ENCODE measurements at regions of chr6 and their contacts with region 1.

Region 1: GRCh38 chr6:143510991-143511891 is at the start of gene FUCA2:
- DNase-seq: peak; percentile 91 to 93
- H3K4me3 ChIP-seq: peak within 1 kb of the TSS; percentile 60
- H3K4me3 Mint-ChIP-seq: peak within 1 kb of the TSS; percentile 97
- H3K27ac Mint-ChIP-seq: peak within 1 kb of the TSS; percentile 91
- H3K4me1 ChIP-seq: peaks cover 11% of the 10 kb centered on the region
- H3K4me1 Mint-ChIP-seq: peaks cover 16% of the 10 kb centered on the region
- H3K27me3 ChIP-seq: no peaks in the 10 kb centered on the region
- H3K27me3 Mint-ChIP-seq: no peaks in the 10 kb centered on the region
- CTCF ChIP-seq: peak in 1 of 2 experiments; percentile 17
- total RNA-seq, gene FUCA2: 102 and 119 TPM in 2 replicates

Region 2: DNA sequence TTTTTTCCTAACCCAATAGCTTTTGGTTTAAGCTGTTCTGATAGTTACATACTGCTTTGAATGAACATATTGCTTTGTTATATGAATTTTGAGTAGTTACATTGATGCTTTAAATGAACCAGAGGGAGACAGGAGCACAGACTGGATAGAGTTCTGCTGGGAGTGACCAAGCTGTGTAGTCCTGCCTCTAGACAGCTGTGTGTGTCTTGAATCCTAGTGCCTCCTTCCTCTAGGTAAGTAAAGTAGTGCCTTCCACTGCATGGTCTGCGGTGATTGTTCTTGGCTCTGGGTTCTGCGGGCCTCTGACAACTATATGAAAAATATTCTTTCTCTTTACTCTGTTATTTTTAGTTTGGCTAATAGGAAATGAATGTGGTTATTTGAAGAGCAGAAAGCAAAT is 1255.5 kb before region 1 on chr6:
- CTCF ChIA-PET with region 1: no interaction called
- POLR2A ChIA-PET with region 1: no interaction called
- intact Hi-C with region 1: loop called (anchors 5 kb)
- DNase-seq: no peak
- H3K4me3 ChIP-seq: no peak overlapping the region
- H3K4me3 Mint-ChIP-seq: no peak overlapping the region
- H3K27ac Mint-ChIP-seq: no peak overlapping the region
- H3K4me1 ChIP-seq: peaks cover 22% of the 10 kb centered on the region
- H3K4me1 Mint-ChIP-seq: peaks cover 19% of the 10 kb centered on the region
- H3K27me3 ChIP-seq: no peaks in the 10 kb centered on the region
- H3K27me3 Mint-ChIP-seq: no peaks in the 10 kb centered on the region
- CTCF ChIP-seq: no peak

Region 3: DNA sequence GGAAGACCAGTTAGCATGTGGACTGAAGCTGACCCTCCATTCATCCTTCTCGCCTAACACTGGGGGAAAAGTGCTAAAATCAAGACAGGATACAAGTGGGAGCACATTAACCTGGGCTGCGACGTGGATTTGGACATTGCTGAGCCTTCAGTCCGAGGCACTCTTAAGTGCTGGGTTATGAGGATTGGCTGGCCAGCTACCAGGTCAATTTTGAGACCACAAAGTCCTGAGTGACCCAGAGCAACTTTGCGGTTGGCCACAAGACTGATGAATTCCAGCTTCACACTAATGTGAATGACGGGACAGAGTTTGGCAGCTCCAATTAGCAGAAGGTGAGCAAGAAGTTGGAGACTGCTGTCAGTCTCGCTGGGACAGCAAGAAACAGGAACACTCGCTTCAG is 20.5 kb before region 1 on chr6:
- CTCF ChIA-PET with region 1: no interaction called
- POLR2A ChIA-PET with region 1: no interaction called
- intact Hi-C with region 1: no loop called
- DNase-seq: no peak
- H3K4me3 ChIP-seq: no peak overlapping the region
- H3K4me3 Mint-ChIP-seq: no peak overlapping the region
- H3K27ac Mint-ChIP-seq: no peak overlapping the region
- H3K4me1 ChIP-seq: no peaks in the 10 kb centered on the region
- H3K4me1 Mint-ChIP-seq: peaks cover 15% of the 10 kb centered on the region
- H3K27me3 ChIP-seq: no peaks in the 10 kb centered on the region
- H3K27me3 Mint-ChIP-seq: no peaks in the 10 kb centered on the region
- CTCF ChIP-seq: no peak

Region 4: GRCh38 chr6:143536865-143537691 is 25.8 kb after region 1 on chr6:
- CTCF ChIA-PET with region 1: interaction called, 3 read pairs
- POLR2A ChIA-PET with region 1: interaction called, 15 read pairs
- intact Hi-C with region 1: loop called (anchors 1 kb)
- DNase-seq: peak; percentile 78 to 84
- H3K4me3 ChIP-seq: peak overlapping the region; percentile 39
- H3K4me3 Mint-ChIP-seq: peak overlapping the region; percentile 82
- H3K27ac Mint-ChIP-seq: peak overlapping the region; percentile 84
- H3K4me1 ChIP-seq: peaks cover 61% of the 10 kb centered on the region
- H3K4me1 Mint-ChIP-seq: peaks cover 24% of the 10 kb centered on the region
- H3K27me3 ChIP-seq: no peaks in the 10 kb centered on the region
- H3K27me3 Mint-ChIP-seq: no peaks in the 10 kb centered on the region
- CTCF ChIP-seq: peak; percentile 19 to 63

Region 5: GRCh38 chr6:143545976-143546547 is 34.8 kb after region 1 on chr6:
- CTCF ChIA-PET with region 1: interaction called, 3 read pairs
- POLR2A ChIA-PET with region 1: interaction called, 3 read pairs
- intact Hi-C with region 1: loop called (anchors 2 kb)
- DNase-seq: peak in 1 of 2 experiments; percentile 50
- H3K4me3 ChIP-seq: no peak overlapping the region
- H3K4me3 Mint-ChIP-seq: peak overlapping the region; percentile 39
- H3K27ac Mint-ChIP-seq: peak overlapping the region; percentile 75
- H3K4me1 ChIP-seq: peaks cover 69% of the 10 kb centered on the region
- H3K4me1 Mint-ChIP-seq: peaks cover 47% of the 10 kb centered on the region
- H3K27me3 ChIP-seq: no peaks in the 10 kb centered on the region
- H3K27me3 Mint-ChIP-seq: no peaks in the 10 kb centered on the region
- CTCF ChIP-seq: no peak

Region 6: GRCh38 chr6:143901885-143902750 is 390.9 kb after region 1 on chr6:
- CTCF ChIA-PET with region 1: no interaction called
- POLR2A ChIA-PET with region 1: no interaction called
- intact Hi-C with region 1: no loop called
- DNase-seq: no peak
- H3K4me3 ChIP-seq: no peak overlapping the region
- H3K4me3 Mint-ChIP-seq: no peak overlapping the region
- H3K27ac Mint-ChIP-seq: no peak overlapping the region
- H3K4me1 ChIP-seq: no peaks in the 10 kb centered on the region
- H3K4me1 Mint-ChIP-seq: no peaks in the 10 kb centered on the region
- H3K27me3 ChIP-seq: no peaks in the 10 kb centered on the region
- H3K27me3 Mint-ChIP-seq: peaks cover 3% of the 10 kb centered on the region
- CTCF ChIP-seq: no peak

Measured in Caco-2 (cell line).